PC-3 (cell line): ENCODE measurements at regions of chr11 and their contacts with region 1.

Region 1: GRCh38 chr11:103927535-103927934 is 108.9 kb upstream of the DDI1 start:
- DNase-seq: peak; percentile 49
- ATAC-seq: peak; percentile 64
- H3K4me3 ChIP-seq: no peak overlapping the region
- H3K27ac ChIP-seq: no peak overlapping the region
- H3K4me1 ChIP-seq: peaks cover 18% of the 10 kb centered on the region
- H3K27me3 ChIP-seq: no peaks in the 10 kb centered on the region
- CTCF ChIP-seq: peak; percentile 83

Region 2: DNA sequence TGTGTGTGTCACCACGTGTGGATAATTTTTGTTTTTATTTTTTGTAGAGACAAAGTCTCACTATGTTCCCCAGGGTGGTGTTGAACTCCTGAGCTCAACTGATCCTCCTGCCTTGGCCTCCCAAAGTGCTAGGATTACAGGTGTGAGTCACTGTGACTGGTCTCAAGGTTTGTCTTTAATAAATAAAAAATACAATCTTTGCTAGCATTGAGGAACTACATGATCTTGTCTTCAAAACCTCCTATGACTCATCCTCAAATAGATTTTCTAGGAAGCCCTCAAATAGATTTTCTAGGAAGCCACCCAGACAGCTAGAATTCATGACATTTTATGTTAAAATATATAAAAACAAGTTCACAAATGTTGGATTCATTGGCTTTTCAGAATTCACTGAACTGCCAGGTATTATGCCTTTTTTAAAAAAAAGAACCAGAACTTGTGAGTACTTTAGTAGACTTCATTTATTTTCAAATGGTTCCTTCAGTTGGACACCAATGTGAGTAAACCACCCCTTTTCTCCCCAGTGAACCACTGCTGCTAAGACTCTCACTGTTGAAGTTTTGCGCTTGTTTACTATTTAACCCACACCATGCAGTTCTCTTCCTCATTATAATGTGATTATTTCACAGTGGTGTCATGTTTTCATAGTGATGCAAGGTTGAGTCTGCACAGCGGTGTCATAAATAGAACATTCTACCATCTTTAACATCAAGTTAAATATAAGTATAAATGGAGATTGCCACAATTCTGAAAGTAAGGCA is 666.8 kb after region 1 on chr11:
- CTCF ChIA-PET with region 1: no interaction called
- POLR2A ChIA-PET with region 1: no interaction called
- intact Hi-C with region 1: loop called (anchors 10 kb)
- DNase-seq: peak; percentile 58
- ATAC-seq: peak; percentile 71
- H3K4me3 ChIP-seq: no peak overlapping the region
- H3K27ac ChIP-seq: no peak overlapping the region
- H3K4me1 ChIP-seq: peaks cover 10% of the 10 kb centered on the region; the same call in 1 of the 2 replicates
- H3K27me3 ChIP-seq: no peaks in the 10 kb centered on the region
- CTCF ChIP-seq: no peak